ENCODE measurements at regions of chr11 and their contacts with region 1.

Region 1: GRCh38 chr11:44036811-44037657 is 10.7 kb upstream of the ACCSL start:
- DNase-seq: peak in 1 of 2 donors; percentile 22
- H3K4me3 ChIP-seq: no peak overlapping the region
- H3K27ac ChIP-seq: no peak overlapping the region
- H3K4me1 ChIP-seq: no peaks in the 10 kb centered on the region
- H3K27me3 ChIP-seq: no peaks in the 10 kb centered on the region
- CTCF ChIP-seq: peak in 2 of 3 donors; percentile 35 to 78
- POLR2A ChIP-seq: no peak

Region 2: DNA sequence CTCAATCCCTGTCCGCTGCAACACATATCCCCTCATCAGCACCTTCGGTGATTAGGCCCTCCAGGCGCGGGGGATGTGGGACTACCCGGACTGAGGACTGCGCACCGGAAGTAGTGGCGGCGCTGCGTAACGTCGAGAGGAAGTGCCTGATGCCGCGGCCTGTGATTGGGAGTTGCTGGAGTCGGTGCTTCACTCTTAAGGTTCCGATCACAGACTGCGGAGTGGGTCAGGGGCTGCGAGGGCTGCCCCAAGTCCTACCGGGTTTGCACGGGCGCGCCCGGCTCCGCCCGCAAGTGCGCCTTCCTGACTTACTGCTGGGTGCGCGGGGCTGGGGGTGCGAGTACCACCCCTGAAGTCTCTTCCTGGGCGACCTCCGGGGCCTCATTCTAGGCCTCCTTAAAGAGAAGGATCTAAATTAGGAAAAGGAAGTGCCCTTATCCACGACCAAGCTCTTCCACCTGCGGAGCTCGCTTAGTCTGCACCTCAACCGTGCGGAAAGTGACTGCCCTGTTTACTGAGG is 156.3 kb before region 1 on chr11 and contains the start of gene ALKBH3:
- intact Hi-C with region 1: loop called (anchors 10 kb)
- DNase-seq: peak; percentile 85 to 90
- H3K4me3 ChIP-seq: peak within 1 kb of the TSS; percentile 76 to 93 (median 92)
- H3K27ac ChIP-seq: peak within 1 kb of the TSS; percentile 32 to 68
- H3K4me1 ChIP-seq: peaks cover 5 to 8% of the 10 kb centered on the region in 2 donors
- H3K27me3 ChIP-seq: peaks cover 0 to 25% of the 10 kb centered on the region in 2 donors
- CTCF ChIP-seq: peak in 1 of 3 donors; percentile 29
- POLR2A ChIP-seq: no peak
- total RNA-seq, gene ALKBH3: 29.0 to 40.7 (median 33.1) TPM

Region 3: GRCh38 chr11:43984519-43985385 is 52.3 kb before region 1 on chr11:
- intact Hi-C with region 1: no loop called
- DNase-seq: no peak
- H3K4me3 ChIP-seq: no peak overlapping the region
- H3K27ac ChIP-seq: peak overlapping the region in 1 of 2 donors; percentile 44
- H3K4me1 ChIP-seq: peaks cover 0 to 4% of the 10 kb centered on the region in 2 donors
- H3K27me3 ChIP-seq: peaks cover 0 to 7% of the 10 kb centered on the region in 2 donors
- CTCF ChIP-seq: no peak
- POLR2A ChIP-seq: no peak